OCI-LY7 (cell line): ENCODE measurements at regions of chr6 and their contacts with region 1.

Region 1: DNA sequence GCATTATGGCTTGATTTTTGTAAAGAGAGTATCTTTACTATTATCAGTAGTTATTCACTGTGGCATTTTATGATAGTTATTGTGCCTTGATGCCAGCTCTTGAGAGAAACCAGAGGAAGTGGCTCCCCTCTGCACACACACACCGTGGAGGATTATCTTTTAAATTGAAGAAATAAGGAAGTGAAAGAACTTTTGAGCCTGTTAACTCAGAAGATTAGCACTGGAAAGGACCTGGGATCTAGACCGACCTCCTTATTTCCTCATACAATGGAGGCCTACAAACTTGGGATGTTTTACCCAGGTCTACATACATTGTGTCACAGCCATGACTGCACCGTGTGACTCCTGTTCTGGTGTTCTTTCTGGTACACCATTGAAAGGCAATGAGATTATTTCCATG is 40.5 kb downstream of the HECA start:
- DNase-seq: peak; percentile 68
- H3K4me3 ChIP-seq: no peak overlapping the region
- H3K27ac ChIP-seq: peak overlapping the region; percentile 12
- H3K4me1 ChIP-seq: peaks cover 34% of the 10 kb centered on the region
- CTCF ChIP-seq: no peak

Region 2: GRCh38 chr6:139124887-139125672 is 50.3 kb before region 1 on chr6:
- CTCF ChIA-PET with region 1: no interaction called
- POLR2A ChIA-PET with region 1: interaction called, 3 read pairs
- intact Hi-C with region 1: loop called (anchors 5 kb)
- DNase-seq: peak; percentile 92
- H3K4me3 ChIP-seq: peak overlapping the region; percentile 19
- H3K27ac ChIP-seq: peak overlapping the region; percentile 21
- H3K4me1 ChIP-seq: peaks cover 21% of the 10 kb centered on the region
- CTCF ChIP-seq: peak; percentile 98

Region 3: DNA sequence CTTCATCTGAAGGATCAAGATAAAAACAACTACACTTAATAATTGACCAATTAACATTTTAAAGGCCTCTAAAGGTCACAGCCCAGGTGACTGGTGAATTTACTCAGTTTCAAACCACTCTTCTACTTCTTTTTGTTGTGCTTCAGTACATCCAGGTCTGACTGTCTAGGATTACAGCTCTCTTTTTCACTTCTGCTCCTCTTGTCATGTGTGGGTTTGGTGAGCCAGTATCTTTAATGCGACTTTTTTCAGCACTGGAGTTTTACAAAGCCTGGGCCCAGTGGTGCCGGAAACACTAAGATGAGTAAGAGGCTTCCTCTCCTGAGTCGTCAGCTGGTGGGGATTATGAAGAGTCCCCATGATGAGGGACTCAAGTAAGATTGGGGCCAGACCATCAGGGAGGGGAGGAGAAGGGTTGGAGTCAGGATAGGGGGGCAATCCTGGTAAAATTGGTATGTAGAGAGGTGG is 13.5 kb before region 1 on chr6:
- CTCF ChIA-PET with region 1: interaction called, 3 read pairs
- POLR2A ChIA-PET with region 1: interaction called, 13 read pairs
- intact Hi-C with region 1: no loop called
- DNase-seq: peak; percentile 71
- H3K4me3 ChIP-seq: no peak overlapping the region
- H3K27ac ChIP-seq: peak overlapping the region; percentile 55
- H3K4me1 ChIP-seq: peaks cover 53% of the 10 kb centered on the region
- CTCF ChIP-seq: no peak

Region 4: GRCh38 chr6:139474145-139475108 is 299.0 kb after region 1 on chr6:
- CTCF ChIA-PET with region 1: no interaction called
- POLR2A ChIA-PET with region 1: no interaction called
- intact Hi-C with region 1: no loop called
- DNase-seq: no peak
- H3K4me3 ChIP-seq: no peak overlapping the region
- H3K27ac ChIP-seq: no peak overlapping the region
- H3K4me1 ChIP-seq: no peaks in the 10 kb centered on the region
- CTCF ChIP-seq: no peak